ENCODE measurements at regions of chr14 and their contacts with region 1.

Region 1: GRCh38 chr14:99320105-99320572 is 48.1 kb upstream of the BCL11B start:
- DNase-seq: peak; percentile 85
- ATAC-seq: peak; percentile 87
- H3K4me3 Mint-ChIP-seq: no peak overlapping the region
- H3K27ac Mint-ChIP-seq: no peak overlapping the region
- H3K4me1 Mint-ChIP-seq: peaks cover 19% of the 10 kb centered on the region
- H3K27me3 Mint-ChIP-seq: no peaks in the 10 kb centered on the region
- CTCF ChIP-seq: peak; percentile 95

Region 2: DNA sequence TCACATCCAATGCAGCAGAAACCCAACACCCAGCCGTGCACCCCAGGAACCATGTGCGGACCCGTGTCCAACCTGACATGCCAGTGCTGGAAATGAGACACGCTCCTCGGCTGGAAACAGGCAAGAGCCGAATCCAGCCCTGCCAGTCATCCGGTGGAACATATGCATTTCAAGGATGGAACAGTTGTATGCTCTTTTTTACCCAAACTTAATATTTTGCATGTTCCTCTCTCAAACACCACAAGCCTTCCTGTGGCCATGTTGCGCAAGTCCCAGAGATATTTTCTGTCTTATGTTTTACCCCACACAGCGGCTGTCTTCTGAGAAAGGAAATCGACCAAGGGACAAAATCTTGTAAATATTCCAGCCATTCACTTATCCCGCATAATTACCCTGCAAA is 245.1 kb before region 1 on chr14:
- CTCF ChIA-PET with region 1: no interaction called
- POLR2A ChIA-PET with region 1: no interaction called
- DNase-seq: no peak
- ATAC-seq: no peak
- H3K4me3 Mint-ChIP-seq: no peak overlapping the region
- H3K27ac Mint-ChIP-seq: no peak overlapping the region
- H3K4me1 Mint-ChIP-seq: no peaks in the 10 kb centered on the region
- H3K27me3 Mint-ChIP-seq: no peaks in the 10 kb centered on the region
- CTCF ChIP-seq: no peak

Region 3: DNA sequence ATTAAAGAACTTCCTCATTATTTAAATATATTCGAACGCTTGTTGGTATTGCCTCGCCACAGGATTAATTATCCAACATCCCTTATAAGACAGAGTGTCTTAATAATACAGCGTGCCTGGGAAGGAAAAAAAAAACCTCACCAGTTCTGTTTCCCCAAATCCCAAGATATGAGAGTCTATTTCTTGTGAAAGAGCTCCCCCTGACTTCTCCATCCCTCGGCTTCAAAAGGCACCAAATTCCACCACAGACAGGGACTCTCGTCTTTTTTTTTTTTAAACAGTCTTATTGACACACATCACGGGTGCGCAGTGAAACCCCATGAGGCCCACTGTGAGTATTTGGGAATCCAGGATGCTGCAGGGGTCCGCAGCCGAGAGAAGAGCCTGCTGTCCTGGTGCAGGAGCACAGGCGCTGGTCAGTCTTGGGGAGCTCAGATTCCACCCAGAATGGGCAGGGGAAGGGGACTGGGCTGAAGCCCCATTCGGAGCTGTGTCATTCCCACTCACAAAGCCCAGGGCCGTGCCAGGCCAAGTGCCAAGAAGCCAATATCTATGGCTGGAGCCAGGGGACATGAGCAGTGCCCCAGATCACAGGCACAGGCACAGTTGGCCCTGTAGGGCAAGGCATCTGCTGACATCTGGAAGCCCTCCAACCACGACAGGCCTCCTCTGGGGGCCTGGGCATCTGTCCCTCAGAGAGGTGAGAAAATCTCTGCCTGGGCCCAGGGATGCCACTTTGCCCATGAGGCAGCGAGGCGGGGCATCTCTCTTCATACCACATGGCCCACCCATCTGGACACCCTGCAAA is 120.1 kb before region 1 on chr14:
- CTCF ChIA-PET with region 1: no interaction called
- POLR2A ChIA-PET with region 1: no interaction called
- DNase-seq: no peak
- ATAC-seq: no peak
- H3K4me3 Mint-ChIP-seq: no peak overlapping the region
- H3K27ac Mint-ChIP-seq: 0 out of 2 replicates have a peak overlapping the region, but pooled peaks have one; percentile 4
- H3K4me1 Mint-ChIP-seq: peaks cover 30% of the 10 kb centered on the region
- H3K27me3 Mint-ChIP-seq: no peaks in the 10 kb centered on the region
- CTCF ChIP-seq: no peak

Region 4: DNA sequence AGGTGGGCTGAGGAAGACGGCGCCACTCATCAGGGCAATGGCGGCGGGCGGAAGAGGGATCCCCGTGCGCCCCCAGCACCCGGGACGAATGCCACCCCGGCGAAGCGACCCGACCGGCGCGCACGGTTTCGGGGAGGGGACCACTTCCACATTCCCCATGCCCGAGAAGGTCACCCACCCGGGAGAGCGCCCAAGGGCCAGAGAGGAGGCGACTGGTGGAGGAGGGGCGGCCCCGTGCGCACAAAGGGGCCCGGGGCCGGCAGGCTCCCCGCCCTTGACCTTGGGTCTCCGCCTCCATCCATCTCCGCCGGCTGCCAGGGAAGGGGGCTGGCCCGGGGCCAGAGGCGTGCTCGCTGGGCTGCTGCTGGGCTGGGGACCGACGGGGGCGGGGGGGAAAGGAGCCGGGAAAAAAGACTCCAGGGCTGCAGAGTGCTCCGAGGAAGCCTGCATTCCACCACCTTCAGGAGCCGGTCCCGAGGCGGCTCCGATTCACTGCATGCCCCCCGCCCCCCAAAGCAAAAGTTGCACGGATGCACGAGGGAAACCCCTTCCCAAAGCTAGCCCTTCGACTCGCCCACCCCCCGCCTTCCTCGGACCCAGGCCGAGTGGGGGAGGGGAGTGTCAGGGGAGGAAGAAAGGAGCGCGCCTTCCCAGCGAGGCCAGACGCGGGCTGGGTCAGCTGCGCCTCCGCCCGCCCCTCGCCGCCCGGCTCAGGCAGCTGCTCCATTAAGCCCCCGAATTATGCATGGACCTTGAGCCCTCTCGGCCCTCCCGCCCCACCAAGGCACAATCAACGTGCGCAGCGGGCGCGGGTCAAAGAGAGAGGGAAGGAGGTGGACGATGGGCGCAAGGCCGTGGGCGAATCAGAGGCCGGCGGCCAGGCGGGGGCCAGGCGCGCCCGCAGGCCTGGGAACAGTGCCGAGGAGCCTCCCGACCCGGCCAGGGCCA is 74.3 kb before region 1 on chr14:
- CTCF ChIA-PET with region 1: interaction called, 10 read pairs
- POLR2A ChIA-PET with region 1: no interaction called
- DNase-seq: peak; percentile 88
- ATAC-seq: peak; percentile 69
- H3K4me3 Mint-ChIP-seq: peak overlapping the region; percentile 73
- H3K27ac Mint-ChIP-seq: peak overlapping the region; percentile 97
- H3K4me1 Mint-ChIP-seq: peaks cover 78% of the 10 kb centered on the region
- H3K27me3 Mint-ChIP-seq: no peaks in the 10 kb centered on the region
- CTCF ChIP-seq: no peak

Region 5: DNA sequence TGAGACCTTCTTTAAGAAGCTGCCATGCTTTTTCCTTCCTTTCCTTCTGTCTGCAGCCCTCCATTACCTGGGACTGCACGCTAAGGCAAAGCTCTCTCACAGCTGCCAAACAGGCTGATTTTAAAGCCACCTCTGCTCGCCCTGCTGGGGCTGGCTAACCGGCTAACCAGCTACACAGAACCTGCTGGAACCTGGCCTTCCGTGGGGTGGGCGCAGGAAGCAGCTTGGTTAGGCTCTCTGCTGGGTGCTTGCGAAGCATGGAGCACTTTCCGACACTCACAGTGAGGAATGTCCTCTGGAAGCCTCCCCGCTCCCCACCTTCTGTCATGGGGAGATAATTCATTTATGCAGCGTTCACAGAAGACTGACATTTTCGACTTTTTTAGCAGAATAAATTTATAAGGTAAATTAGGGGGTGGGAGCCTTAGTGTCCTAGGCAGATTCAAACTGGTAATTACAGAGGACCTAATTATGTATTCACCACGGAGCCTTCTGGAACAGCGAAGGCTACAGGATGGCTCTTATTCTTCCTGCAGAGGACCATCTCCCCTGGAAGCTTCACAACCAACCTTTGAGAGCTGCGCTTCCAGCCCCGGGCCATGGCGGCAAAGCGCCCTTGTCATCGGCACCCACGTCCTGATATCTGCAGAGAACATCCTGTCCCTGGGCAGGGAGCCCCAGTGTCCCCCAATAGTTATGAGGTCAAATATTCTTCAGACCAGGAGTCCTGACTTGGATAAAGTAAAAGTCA is 35.7 kb before region 1 on chr14:
- CTCF ChIA-PET with region 1: interaction called, 29 read pairs
- POLR2A ChIA-PET with region 1: no interaction called
- DNase-seq: no peak
- ATAC-seq: peak; percentile 77
- H3K4me3 Mint-ChIP-seq: no peak overlapping the region
- H3K27ac Mint-ChIP-seq: no peak overlapping the region
- H3K4me1 Mint-ChIP-seq: peaks cover 12% of the 10 kb centered on the region
- H3K27me3 Mint-ChIP-seq: no peaks in the 10 kb centered on the region
- CTCF ChIP-seq: no peak

Region 6: GRCh38 chr14:99351166-99352007 is 31.2 kb after region 1 on chr14:
- CTCF ChIA-PET with region 1: interaction called, 34 read pairs
- POLR2A ChIA-PET with region 1: no interaction called
- DNase-seq: no peak
- ATAC-seq: 0 out of 2 replicates have a peak, but pooled peaks have one; percentile 20
- H3K4me3 Mint-ChIP-seq: no peak overlapping the region
- H3K27ac Mint-ChIP-seq: no peak overlapping the region
- H3K4me1 Mint-ChIP-seq: peaks cover 2% of the 10 kb centered on the region; the same call in 1 of the 2 replicates
- H3K27me3 Mint-ChIP-seq: no peaks in the 10 kb centered on the region
- CTCF ChIP-seq: no peak

Region 7: GRCh38 chr14:99393047-99393655 is 73.0 kb after region 1 on chr14:
- CTCF ChIA-PET with region 1: interaction called, 49 read pairs
- POLR2A ChIA-PET with region 1: no interaction called
- DNase-seq: peak; percentile 74
- ATAC-seq: peak; percentile 71
- H3K4me3 Mint-ChIP-seq: no peak overlapping the region
- H3K27ac Mint-ChIP-seq: peak overlapping the region; percentile 92; the same call in 1 of the 2 replicates
- H3K4me1 Mint-ChIP-seq: peaks cover 37% of the 10 kb centered on the region
- H3K27me3 Mint-ChIP-seq: no peaks in the 10 kb centered on the region
- CTCF ChIP-seq: peak; percentile 89

Region 8: DNA sequence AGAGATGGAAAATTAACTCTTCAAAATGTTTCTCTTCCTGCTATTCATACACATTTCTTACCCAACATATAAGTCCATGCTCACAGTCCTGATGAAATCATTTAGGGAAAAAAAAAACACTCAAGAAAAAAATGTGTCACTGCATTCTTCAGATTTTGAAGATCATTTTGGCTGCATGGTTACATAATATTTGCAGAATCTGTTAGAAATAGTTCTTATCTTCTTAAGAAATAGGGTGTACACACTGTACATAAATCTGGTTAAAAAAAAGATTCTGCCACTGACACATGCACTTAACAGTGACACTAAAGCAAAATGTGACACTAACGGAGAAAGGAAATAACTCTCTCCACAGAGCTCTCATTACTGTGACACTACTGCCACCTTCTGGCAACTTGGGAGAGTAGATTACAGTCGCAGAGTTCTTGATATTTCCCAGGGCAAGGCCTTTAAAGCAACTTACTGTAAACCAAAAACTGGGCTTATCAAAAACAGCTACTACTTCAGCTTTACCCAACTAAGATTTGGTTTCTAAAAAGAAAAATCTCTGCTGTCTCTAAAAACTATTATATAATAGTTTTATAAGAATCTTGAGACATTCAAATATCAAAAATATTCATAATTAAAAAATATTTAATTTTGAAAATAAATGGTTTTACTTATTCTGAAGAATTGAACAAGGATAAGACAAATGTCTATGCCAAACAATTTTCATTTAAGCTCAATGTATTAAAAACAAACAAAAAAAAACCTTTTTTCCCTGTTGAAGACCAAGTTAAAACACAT is 95.5 kb after region 1 on chr14:
- CTCF ChIA-PET with region 1: interaction called, 85 read pairs
- POLR2A ChIA-PET with region 1: no interaction called
- DNase-seq: peak; percentile 52
- ATAC-seq: peak; percentile 35
- H3K4me3 Mint-ChIP-seq: peak overlapping the region; percentile 8
- H3K27ac Mint-ChIP-seq: peak overlapping the region; percentile 16
- H3K4me1 Mint-ChIP-seq: peaks cover 61% of the 10 kb centered on the region
- H3K27me3 Mint-ChIP-seq: no peaks in the 10 kb centered on the region
- CTCF ChIP-seq: peak; percentile 70